B cell (primary cell): ENCODE measurements at regions of chr10 and their contacts with region 1.

Region 1: GRCh38 chr10:132452631-132453469 is 55.9 kb downstream of the PWWP2B start:
- DNase-seq: peak; percentile 95
- ATAC-seq: peak; percentile 92
- H3K4me3 ChIP-seq: peak overlapping the region in 2 of 5 experiments; percentile 21 to 45
- H3K4me3 Mint-ChIP-seq: peak overlapping the region; percentile 64
- H3K27ac ChIP-seq: peak overlapping the region; percentile 83 to 84
- H3K27ac Mint-ChIP-seq: peak overlapping the region; percentile 86
- H3K4me1 ChIP-seq: peaks cover 22 to 35% of the 10 kb centered on the region in 2 donors
- H3K4me1 Mint-ChIP-seq: peaks cover 30% of the 10 kb centered on the region
- H3K27me3 ChIP-seq: no peaks in the 10 kb centered on the region
- H3K27me3 Mint-ChIP-seq: no peaks in the 10 kb centered on the region
- CTCF ChIP-seq: peak; percentile 91

Region 2: GRCh38 chr10:131885391-131886161 is 567.3 kb before region 1 on chr10:
- CTCF ChIA-PET with region 1: no interaction called
- POLR2A ChIA-PET with region 1: no interaction called
- intact Hi-C with region 1: loop called (anchors 10 kb)
- DNase-seq: peak; percentile 80
- ATAC-seq: peak; percentile 99
- H3K4me3 ChIP-seq: no peak overlapping the region
- H3K4me3 Mint-ChIP-seq: no peak overlapping the region
- H3K27ac ChIP-seq: no peak overlapping the region
- H3K27ac Mint-ChIP-seq: no peak overlapping the region
- H3K4me1 ChIP-seq: peaks cover 3 to 7% of the 10 kb centered on the region in 2 donors
- H3K4me1 Mint-ChIP-seq: peaks cover 3% of the 10 kb centered on the region
- H3K27me3 ChIP-seq: peaks cover 0 to 28% (median 0%) of the 10 kb centered on the region in 4 experiments
- H3K27me3 Mint-ChIP-seq: peaks cover 12% of the 10 kb centered on the region
- CTCF ChIP-seq: peak; percentile 92

Region 3: DNA sequence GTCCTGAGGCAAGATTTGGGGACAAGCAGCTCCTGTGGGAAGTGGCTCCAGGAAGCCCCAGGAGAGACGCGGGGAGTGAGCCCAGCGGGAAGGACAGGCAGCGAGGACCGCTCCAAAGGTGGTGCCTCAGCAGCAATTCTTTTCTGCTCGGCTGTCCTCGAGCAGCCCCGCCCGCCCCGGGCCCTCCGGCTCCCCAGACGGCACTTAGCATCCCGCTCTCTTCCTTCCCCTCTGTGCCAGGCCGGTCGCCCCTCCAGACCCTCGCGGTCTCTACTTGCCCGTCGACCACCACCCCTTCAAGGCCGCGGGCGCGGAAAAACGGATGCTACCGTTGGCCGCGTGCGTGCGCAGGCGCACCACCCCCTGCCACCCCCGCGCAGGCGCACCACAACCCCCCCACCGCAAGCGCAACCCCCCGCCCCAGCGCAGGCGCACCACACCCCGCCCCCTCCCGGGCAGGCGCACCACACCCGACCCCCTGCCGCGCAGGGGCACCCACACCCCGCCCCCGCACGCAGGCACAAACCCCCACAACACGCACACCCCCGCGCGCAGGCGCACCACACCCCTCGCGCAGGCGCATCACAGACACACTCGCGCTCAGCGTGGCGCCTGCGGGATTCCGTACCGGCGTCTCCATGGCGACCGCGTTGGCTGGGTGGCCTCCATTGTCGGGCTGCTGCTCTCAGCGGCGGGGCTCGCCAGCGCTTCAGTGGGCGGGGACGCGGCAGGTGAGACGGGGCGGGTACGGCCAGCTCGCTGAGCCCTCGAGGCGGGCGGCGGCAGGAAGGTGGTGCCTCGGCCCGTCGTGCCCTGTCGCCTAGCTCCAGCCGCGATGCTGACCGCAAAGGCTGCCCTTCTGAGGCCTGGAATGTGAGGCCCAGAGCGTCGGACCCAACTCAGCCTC is 121.1 kb before region 1 on chr10 and contains the start of gene LRRC27:
- CTCF ChIA-PET with region 1: no interaction called
- POLR2A ChIA-PET with region 1: no interaction called
- intact Hi-C with region 1: loop called (anchors 2 kb)
- DNase-seq: peak; percentile 100
- ATAC-seq: peak; percentile 78
- H3K4me3 ChIP-seq: peak within 1 kb of the TSS; percentile 81 to 95 (median 90)
- H3K4me3 Mint-ChIP-seq: peak within 1 kb of the TSS; percentile 83
- H3K27ac ChIP-seq: peak within 1 kb of the TSS; percentile 93 to 96
- H3K27ac Mint-ChIP-seq: peak within 1 kb of the TSS; percentile 99
- H3K4me1 ChIP-seq: peaks cover 50 to 60% of the 10 kb centered on the region in 2 donors
- H3K4me1 Mint-ChIP-seq: peaks cover 75% of the 10 kb centered on the region
- H3K27me3 ChIP-seq: no peaks in the 10 kb centered on the region
- H3K27me3 Mint-ChIP-seq: no peaks in the 10 kb centered on the region
- CTCF ChIP-seq: no peak
- total RNA-seq, gene LRRC27: 23.6 and 32.2 TPM in 2 replicates

Region 4: GRCh38 chr10:132353456-132354355 is 99.1 kb before region 1 on chr10:
- CTCF ChIA-PET with region 1: no interaction called
- POLR2A ChIA-PET with region 1: no interaction called
- intact Hi-C with region 1: loop called (anchors 1 kb)
- DNase-seq: no peak
- ATAC-seq: no peak
- H3K4me3 ChIP-seq: no peak overlapping the region
- H3K4me3 Mint-ChIP-seq: no peak overlapping the region
- H3K27ac ChIP-seq: no peak overlapping the region
- H3K27ac Mint-ChIP-seq: no peak overlapping the region
- H3K4me1 ChIP-seq: peaks cover 0 to 7% of the 10 kb centered on the region in 2 donors
- H3K4me1 Mint-ChIP-seq: peaks cover 5% of the 10 kb centered on the region
- H3K27me3 ChIP-seq: no peaks in the 10 kb centered on the region
- H3K27me3 Mint-ChIP-seq: no peaks in the 10 kb centered on the region
- CTCF ChIP-seq: no peak

Region 5: DNA sequence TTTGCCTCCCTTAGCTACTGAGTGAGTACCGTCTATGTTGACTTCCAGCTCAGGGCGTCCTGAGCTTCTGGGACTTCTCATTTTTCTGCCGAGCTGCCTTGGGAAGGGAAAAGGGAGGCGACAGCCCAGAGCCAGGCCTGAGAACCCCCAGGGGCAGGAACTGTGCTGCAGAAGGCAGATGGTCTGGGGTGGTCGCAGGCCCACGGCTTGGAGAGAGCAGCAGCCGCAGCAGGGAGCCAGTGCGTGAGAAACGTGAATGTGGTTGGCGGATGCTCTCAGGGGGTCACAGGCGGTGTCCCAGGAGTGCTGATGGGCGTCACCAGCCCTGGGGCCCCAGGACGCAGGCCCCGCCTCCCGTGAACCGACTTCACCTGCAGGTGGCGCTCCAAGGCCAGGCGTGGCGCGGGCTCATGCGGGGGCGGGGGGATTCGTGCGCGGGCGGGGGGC is 65.1 kb before region 1 on chr10:
- CTCF ChIA-PET with region 1: interaction called, 15 read pairs
- POLR2A ChIA-PET with region 1: interaction called, 3 read pairs
- intact Hi-C with region 1: loop called (anchors 1 kb)
- DNase-seq: peak; percentile 89
- ATAC-seq: peak; percentile 95
- H3K4me3 ChIP-seq: peak overlapping the region in 4 of 5 experiments; percentile 16 to 47 (median 28)
- H3K4me3 Mint-ChIP-seq: peak overlapping the region; percentile 85
- H3K27ac ChIP-seq: peak overlapping the region; percentile 66 to 72
- H3K27ac Mint-ChIP-seq: peak overlapping the region; percentile 91
- H3K4me1 ChIP-seq: peaks cover 6 to 21% of the 10 kb centered on the region in 2 donors
- H3K4me1 Mint-ChIP-seq: peaks cover 9% of the 10 kb centered on the region
- H3K27me3 ChIP-seq: no peaks in the 10 kb centered on the region
- H3K27me3 Mint-ChIP-seq: no peaks in the 10 kb centered on the region
- CTCF ChIP-seq: peak; percentile 56

Region 6: DNA sequence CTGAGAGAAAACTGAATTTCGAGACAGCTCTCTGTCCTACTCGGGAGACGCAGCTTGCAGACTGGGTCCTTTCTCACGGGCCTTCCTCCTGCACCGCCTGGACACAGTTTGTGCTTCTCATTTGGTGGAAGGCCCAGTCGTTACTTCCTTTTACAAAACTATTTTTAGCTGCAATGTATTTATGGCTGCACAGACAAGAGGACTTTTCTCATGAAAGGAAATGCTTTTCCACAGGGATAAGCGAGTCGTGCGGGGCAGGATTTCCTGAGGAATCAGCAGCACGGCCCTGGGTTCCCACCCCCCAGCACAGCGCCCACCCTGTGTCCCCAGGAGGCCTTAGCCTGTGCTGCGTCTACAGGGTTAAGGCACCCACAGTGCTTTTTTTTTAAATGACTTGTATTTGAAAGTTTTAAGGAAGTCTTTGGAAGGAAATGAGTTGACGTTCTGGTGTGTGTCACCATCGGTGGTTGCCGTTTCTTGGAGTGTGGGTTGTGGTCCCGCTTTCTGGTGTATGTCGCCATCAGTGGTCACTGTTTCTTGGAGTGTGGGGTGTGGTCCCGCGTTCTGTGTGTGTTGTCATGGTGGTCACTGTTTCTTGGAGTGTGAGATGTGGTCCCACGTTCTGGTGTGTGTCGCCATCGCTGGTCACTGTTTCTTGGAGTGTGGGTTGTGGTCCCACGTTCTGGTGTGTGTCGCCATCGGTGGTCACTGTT is 135.6 kb after region 1 on chr10:
- CTCF ChIA-PET with region 1: no interaction called
- POLR2A ChIA-PET with region 1: no interaction called
- intact Hi-C with region 1: loop called (anchors 5 kb)
- DNase-seq: peak; percentile 80
- ATAC-seq: peak; percentile 62
- H3K4me3 ChIP-seq: peak overlapping the region in 4 of 5 experiments; percentile 18 to 47 (median 36)
- H3K4me3 Mint-ChIP-seq: peak overlapping the region; percentile 89
- H3K27ac ChIP-seq: peak overlapping the region; percentile 82 to 86
- H3K27ac Mint-ChIP-seq: peak overlapping the region; percentile 95
- H3K4me1 ChIP-seq: peaks cover 57 to 71% of the 10 kb centered on the region in 2 donors
- H3K4me1 Mint-ChIP-seq: peaks cover 82% of the 10 kb centered on the region
- H3K27me3 ChIP-seq: no peaks in the 10 kb centered on the region
- H3K27me3 Mint-ChIP-seq: no peaks in the 10 kb centered on the region
- CTCF ChIP-seq: no peak